Activated T-helper 2 cell treated with anti-CD3 and anti-CD28 coated beads, Interferon-gamma antibody, Interleukin-2, Interleukin-4, amounts not matched to agents 10 μg/mL and 5 μg/mL and 100 μg/mL, durations not matched to agents 14 hours and 24 hours and 36 hours (primary cell): ENCODE measurements at regions of chr12 and their contacts with region 1.

Region 1: DNA sequence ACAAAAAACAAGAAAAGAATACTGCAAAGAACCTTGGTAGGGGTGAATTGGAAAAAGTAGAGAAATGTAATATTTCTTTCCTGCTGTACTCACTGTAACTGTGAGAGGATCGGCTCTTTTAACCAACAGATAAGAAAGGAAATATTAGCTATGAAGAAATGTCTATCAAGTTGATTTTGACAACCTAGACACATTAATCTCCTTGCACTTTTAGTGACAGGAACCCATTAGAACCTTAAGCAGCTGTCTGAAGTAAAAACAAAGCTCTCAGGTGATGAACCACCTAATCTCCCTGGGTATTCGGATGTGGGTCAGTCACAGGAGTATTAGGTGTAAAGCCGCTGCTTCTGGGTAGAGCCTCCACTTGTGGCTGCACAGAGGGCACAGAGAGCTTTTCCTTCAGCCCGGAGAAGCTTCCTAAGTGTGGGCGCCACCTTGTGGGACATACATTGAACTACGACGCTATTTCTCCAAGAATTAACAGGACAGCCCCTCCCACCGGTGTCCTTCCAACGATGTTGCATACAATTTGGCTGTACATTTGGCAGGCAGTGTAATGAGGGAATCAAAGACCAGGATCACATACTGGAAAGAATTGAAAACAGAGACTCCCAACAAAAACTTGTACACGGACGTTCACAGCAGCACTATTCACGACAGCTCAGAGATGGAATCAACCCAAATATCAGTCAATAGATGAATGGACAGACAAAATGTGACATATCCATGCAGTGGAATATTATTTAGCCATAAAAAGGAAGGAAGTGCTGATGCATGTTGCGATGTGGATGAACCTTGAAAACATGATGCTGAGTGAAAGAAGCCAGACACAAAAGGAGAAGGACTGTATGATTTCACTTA is 28.9 kb upstream of the MAPKAPK5 start:
- DNase-seq: peak; percentile 56
- H3K4me3 Mint-ChIP-seq: no peak overlapping the region
- H3K27ac Mint-ChIP-seq: no peak overlapping the region
- H3K4me1 Mint-ChIP-seq: peaks cover 6% of the 10 kb centered on the region
- H3K27me3 Mint-ChIP-seq: peaks cover 4% of the 10 kb centered on the region

Region 2: DNA sequence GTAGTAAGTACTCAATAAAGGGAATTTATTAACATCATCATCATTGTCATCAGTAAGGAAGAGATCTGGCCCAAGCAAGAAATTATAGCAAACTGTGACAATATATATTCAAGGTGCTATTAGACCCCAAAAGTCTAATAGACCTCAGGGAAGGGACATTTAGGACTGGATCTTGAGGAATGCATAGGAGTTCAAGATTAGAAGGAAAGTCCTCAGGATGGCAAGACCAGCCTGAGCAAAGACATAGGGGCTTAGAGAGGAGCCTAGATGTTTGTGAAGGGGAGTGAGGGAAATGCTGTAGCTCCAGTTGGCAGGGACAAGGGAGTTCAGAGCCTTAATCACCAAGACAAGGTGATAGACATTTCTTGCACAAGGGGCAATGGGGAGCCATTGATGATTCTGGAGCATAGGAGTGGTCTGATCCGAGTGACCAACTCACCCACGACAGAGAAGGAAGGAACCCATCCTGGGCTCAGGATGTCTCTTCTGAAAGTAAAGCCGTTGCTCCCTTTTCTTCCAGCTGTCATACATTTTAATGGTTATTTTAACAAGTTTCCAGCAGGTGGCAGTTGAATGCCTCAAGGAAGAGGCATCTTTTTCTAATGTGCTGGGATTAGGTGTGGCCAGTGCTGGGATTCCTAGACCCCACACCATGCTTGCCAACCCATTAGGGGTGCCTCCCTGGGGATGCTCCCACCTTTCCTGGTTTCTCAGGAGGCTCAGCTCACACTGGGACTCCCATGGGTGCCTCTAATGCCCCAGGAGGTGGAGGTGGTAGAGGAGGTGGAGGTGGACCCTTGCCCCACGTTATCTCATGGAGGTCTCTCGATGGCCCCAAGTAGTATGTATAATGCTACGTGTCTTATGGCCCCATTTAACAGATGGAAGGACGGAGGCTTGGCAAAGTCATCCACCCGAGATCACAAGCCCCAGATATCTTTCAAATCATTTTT is 482.0 kb before region 1 on chr12:
- intact Hi-C with region 1: loop called (anchors 5 kb)
- DNase-seq: no peak
- H3K4me3 Mint-ChIP-seq: no peak overlapping the region
- H3K27ac Mint-ChIP-seq: no peak overlapping the region
- H3K4me1 Mint-ChIP-seq: no peaks in the 10 kb centered on the region
- H3K27me3 Mint-ChIP-seq: peaks cover 2% of the 10 kb centered on the region

Region 3: GRCh38 chr12:111396726-111397445 is 416.2 kb before region 1 on chr12:
- intact Hi-C with region 1: loop called (anchors 1 kb)
- DNase-seq: peak; percentile 78
- H3K4me3 Mint-ChIP-seq: peak overlapping the region; percentile 67
- H3K27ac Mint-ChIP-seq: peak overlapping the region; percentile 17
- H3K4me1 Mint-ChIP-seq: peaks cover 27% of the 10 kb centered on the region
- H3K27me3 Mint-ChIP-seq: peaks cover 6% of the 10 kb centered on the region

Region 4: DNA sequence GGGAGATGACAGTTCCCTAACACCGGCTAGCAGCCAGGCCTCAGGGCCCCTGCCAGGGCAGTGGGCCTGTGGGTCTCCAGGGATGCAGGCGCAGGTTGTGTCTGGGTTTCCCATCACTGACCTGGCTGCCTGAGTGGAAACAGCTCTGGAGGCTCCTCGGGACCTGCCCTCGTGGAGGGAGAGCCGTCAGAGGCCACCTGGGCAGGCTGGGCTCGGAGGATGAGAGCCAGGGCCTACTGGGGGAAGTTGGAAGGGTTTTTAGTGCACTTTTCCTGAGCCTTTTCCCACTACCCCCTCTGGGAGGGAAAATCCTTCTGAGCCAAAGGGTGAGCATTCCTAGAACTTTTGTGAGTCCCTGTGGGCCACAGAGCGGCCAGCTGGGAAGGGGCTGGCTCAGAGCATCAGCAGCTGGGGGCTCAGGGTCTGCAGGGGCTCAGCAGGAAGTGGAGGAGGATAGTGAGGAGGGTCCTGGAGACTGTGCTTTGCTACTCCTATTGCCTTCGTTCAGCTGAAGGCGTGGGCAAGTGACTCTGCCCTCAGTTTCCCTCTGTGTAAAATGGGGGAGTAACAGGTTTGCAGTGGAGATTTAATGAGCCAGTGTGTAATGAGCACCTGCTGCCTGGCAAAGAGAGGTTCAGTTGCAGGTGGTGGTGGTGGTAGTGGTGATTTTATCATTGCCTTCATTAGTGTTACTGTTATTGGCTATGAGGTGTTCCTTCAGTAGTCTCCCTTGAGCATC is 405.6 kb before region 1 on chr12:
- intact Hi-C with region 1: no loop called
- DNase-seq: no peak
- H3K4me3 Mint-ChIP-seq: peak overlapping the region; percentile 92
- H3K27ac Mint-ChIP-seq: peak overlapping the region; percentile 91
- H3K4me1 Mint-ChIP-seq: peaks cover 60% of the 10 kb centered on the region
- H3K27me3 Mint-ChIP-seq: no peaks in the 10 kb centered on the region

Region 5: DNA sequence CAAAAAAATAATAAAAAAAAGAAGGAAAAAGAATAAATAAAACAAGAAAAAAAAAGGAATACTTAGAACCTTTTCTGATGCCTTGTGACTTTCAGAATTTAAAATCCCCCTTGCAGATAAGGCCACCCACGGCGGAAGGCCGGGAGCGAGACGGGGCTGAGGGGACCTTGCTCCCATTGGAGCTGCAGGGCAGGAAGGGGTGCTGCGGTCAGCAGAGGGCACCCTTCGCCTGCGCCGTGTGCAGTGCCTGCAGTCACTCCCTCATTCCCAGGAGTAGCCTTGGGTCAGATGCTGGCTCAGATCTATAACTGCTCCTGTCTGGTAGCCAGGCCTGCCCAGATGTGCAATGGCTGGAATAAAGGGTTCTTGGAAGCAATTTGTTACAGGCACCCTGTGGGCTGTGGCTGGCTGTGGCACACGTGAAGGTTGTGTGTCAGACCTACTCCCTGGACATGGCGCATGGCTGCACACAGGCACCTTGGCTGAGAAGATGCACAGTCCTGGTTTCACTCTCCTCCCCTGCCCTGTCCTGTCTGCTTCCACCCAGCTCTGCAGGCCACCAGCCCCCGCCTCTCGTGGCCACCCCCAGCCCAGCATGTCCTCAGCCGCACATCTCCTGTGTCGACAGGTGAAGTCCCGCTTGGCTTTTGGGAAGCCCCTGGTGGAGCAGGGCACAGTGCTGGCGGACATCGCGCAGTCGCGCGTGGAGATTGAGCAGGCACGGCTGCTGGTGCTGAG is 59.8 kb before region 1 on chr12:
- intact Hi-C with region 1: loop called (anchors 5 kb)
- DNase-seq: no peak
- H3K4me3 Mint-ChIP-seq: no peak overlapping the region
- H3K27ac Mint-ChIP-seq: no peak overlapping the region
- H3K4me1 Mint-ChIP-seq: peaks cover 11% of the 10 kb centered on the region
- H3K27me3 Mint-ChIP-seq: no peaks in the 10 kb centered on the region